Endothelial cell of umbilical vein (primary cell): ENCODE measurements at regions of chr16 and their contacts with region 1.

Region 1: DNA sequence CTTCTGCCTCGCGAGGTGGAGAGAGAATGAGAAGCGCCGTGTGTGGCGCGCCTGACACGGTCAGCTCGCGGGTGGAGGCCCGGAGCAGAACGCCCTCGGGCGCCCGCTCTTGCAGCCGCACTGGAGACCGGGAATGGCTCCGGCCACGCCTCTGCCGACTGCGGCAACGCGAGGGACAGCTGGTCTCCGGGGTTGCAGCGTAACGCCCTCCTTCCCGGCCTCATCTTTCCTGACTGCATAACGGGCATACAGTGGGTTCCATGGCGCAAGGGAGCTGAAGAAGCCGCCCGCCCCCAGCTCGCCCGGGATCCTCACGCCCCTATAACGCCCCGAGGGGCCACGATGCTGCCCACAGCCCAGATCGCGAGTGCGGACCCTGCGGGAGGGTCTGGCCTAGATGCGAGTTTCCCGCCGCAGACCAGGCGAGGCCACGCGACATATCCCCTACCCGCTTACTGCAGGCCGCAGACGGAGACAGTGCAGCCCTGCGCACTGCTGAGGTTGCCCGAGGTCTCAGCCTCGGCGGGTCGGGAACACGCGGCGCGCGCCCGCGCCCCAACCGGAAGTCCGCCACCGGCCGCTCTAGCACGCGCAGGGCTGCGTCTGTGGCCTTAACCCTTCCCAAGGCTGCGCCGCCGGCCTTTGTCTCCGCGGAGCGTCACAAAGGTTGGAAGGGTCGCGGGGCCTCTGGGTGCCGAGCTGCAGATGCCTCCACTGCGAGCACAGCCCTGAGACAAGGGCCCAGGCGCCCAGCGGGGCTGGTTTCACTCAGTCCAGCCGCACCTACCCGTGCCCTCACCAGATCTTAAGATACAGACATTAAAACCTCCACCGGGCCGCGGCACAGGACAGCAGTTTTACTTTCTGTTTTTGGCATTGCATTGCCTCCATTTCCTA is 18.8 kb downstream of the BCL7C start:
- DNase-seq: peak; percentile 91
- H3K4me3 ChIP-seq: peak overlapping the region; percentile 66 to 83 (median 80)
- H3K27ac ChIP-seq: peak overlapping the region; percentile 85
- H3K4me1 ChIP-seq: peaks cover 20% of the 10 kb centered on the region
- H3K27me3 ChIP-seq: no peaks in the 10 kb centered on the region
- CTCF ChIP-seq: no peak
- POLR2A ChIP-seq: peak; percentile 99

Region 2: GRCh38 chr16:30805370-30806169 is 69.5 kb before region 1 on chr16:
- CTCF ChIA-PET with region 1: interaction called, 9 read pairs
- POLR2A ChIA-PET with region 1: interaction called, 3 read pairs
- dilution Hi-C with region 1: no loop called
- intact Hi-C with region 1: loop called (anchors 2 kb)
- DNase-seq: peak; percentile 74
- H3K4me3 ChIP-seq: peak overlapping the region; percentile 18 to 57 (median 37)
- H3K27ac ChIP-seq: peak overlapping the region; percentile 18
- H3K4me1 ChIP-seq: peaks cover 8% of the 10 kb centered on the region
- H3K27me3 ChIP-seq: no peaks in the 10 kb centered on the region
- CTCF ChIP-seq: peak in 1 of 2 donors; percentile 3
- POLR2A ChIP-seq: peak; percentile 88

Region 3: GRCh38 chr16:30837894-30838505 is 37.1 kb before region 1 on chr16:
- CTCF ChIA-PET with region 1: no interaction called
- POLR2A ChIA-PET with region 1: no interaction called
- dilution Hi-C with region 1: no loop called
- intact Hi-C with region 1: no loop called
- DNase-seq: no peak
- H3K4me3 ChIP-seq: no peak overlapping the region
- H3K27ac ChIP-seq: no peak overlapping the region
- H3K4me1 ChIP-seq: no peaks in the 10 kb centered on the region
- H3K27me3 ChIP-seq: peaks cover 0 to 2% of the 10 kb centered on the region in 2 experiments
- CTCF ChIP-seq: no peak
- POLR2A ChIP-seq: no peak

Region 4: GRCh38 chr16:30893744-30894539 is 18.9 kb after region 1 on chr16 and contains the start of gene BCL7C:
- CTCF ChIA-PET with region 1: interaction called, 3 read pairs
- POLR2A ChIA-PET with region 1: no interaction called
- dilution Hi-C with region 1: no loop called
- intact Hi-C with region 1: loop called (anchors 1 kb)
- DNase-seq: peak; percentile 89
- H3K4me3 ChIP-seq: peak within 1 kb of the TSS; percentile 39 to 72 (median 63)
- H3K27ac ChIP-seq: peak within 1 kb of the TSS; percentile 38
- H3K4me1 ChIP-seq: peaks cover 13% of the 10 kb centered on the region
- H3K27me3 ChIP-seq: no peaks in the 10 kb centered on the region
- CTCF ChIP-seq: peak; percentile 24 to 55
- POLR2A ChIP-seq: peak; percentile 88
- total RNA-seq, gene BCL7C: 38.3 and 39.5 TPM in 2 replicates

Region 5: DNA sequence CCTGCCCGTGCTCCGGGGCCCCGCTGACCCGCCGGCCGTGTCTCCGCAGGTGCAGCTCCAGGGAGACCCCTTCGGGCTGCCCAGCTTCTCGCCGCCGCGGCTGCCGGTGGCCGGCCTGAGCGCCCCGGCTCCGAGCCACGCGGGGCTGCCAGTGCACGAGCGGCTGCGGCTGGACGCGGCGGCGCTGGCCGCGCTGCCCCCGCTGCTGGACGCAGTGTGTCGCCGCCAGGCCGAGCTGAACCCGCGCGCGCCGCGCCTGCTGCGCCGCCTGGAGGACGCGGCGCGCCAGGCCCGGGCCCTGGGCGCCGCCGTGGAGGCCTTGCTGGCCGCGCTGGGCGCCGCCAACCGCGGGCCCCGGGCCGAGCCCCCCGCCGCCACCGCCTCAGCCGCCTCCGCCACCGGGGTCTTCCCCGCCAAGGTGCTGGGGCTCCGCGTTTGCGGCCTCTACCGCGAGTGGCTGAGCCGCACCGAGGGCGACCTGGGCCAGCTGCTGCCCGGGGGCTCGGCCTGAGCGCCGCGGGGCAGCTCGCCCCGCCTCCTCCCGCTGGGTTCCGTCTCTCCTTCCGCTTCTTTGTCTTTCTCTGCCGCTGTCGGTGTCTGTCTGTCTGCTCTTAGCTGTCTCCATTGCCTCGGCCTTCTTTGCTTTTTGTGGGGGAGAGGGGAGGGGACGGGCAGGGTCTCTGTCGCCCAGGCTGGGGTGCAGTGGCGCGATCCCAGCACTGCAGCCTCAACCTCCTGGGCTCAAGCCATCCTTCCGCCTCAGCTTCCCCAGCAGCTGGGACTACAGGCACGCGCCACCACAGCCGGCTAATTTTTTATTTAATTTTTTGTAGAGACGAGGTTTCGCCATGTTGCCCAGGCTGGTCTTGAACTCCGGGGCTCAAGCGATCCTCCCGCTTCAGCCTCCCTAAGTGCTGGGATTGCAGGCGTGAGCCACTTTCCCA is 27.2 kb after region 1 on chr16:
- CTCF ChIA-PET with region 1: interaction called, 30 read pairs
- POLR2A ChIA-PET with region 1: no interaction called
- dilution Hi-C with region 1: no loop called
- intact Hi-C with region 1: loop called (anchors 1 kb)
- DNase-seq: peak; percentile 67
- H3K4me3 ChIP-seq: peak overlapping the region; percentile 12 to 34 (median 31)
- H3K27ac ChIP-seq: peak overlapping the region; percentile 83
- H3K4me1 ChIP-seq: peaks cover 24% of the 10 kb centered on the region
- H3K27me3 ChIP-seq: no peaks in the 10 kb centered on the region
- CTCF ChIP-seq: peak; percentile 16 to 34
- POLR2A ChIP-seq: peak; percentile 90

Region 6: DNA sequence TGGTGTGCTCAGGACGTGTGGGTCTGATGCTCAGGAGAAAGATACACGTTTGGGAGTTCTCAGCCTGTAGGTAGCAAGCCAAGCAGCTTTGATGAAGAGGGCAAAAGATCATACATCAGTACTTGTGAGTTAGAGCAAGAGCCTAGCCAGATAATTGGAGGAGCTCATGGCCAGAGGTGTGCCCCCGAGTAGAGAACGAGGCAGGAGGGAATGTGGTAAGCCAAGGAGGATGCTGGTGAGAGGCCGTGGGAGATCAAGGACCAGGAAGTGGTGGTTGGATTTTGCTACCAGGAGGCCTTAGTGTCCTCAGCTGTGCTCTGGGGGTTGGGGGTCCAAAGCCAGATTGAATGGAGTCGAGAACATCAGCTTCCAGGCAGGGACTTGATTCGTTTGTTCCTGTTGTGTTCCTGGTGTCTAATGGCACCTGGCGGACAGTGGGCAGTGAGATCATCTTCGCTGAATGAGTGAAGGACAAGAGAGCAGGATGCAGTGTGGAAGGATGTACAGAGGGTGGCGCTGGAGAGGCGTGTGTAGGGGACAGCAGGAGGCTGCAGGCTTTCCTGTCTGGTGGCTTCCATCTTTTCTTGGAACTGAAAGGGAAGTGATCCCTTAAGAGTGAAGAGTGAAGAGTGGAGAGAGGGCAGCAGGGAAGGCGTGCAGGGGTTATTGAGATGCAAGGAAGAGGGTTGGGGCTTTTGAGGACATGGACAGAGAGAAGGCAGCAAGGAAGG is 59.9 kb after region 1 on chr16:
- CTCF ChIA-PET with region 1: no interaction called
- POLR2A ChIA-PET with region 1: no interaction called
- dilution Hi-C with region 1: no loop called
- intact Hi-C with region 1: no loop called
- DNase-seq: peak; percentile 56
- H3K4me3 ChIP-seq: no peak overlapping the region
- H3K27ac ChIP-seq: no peak overlapping the region
- H3K4me1 ChIP-seq: no peaks in the 10 kb centered on the region
- H3K27me3 ChIP-seq: no peaks in the 10 kb centered on the region
- CTCF ChIP-seq: peak; percentile 39 to 65
- POLR2A ChIP-seq: no peak